A549 (cell line): ENCODE measurements at regions of chr15 and their contacts with region 1.

Region 1: DNA sequence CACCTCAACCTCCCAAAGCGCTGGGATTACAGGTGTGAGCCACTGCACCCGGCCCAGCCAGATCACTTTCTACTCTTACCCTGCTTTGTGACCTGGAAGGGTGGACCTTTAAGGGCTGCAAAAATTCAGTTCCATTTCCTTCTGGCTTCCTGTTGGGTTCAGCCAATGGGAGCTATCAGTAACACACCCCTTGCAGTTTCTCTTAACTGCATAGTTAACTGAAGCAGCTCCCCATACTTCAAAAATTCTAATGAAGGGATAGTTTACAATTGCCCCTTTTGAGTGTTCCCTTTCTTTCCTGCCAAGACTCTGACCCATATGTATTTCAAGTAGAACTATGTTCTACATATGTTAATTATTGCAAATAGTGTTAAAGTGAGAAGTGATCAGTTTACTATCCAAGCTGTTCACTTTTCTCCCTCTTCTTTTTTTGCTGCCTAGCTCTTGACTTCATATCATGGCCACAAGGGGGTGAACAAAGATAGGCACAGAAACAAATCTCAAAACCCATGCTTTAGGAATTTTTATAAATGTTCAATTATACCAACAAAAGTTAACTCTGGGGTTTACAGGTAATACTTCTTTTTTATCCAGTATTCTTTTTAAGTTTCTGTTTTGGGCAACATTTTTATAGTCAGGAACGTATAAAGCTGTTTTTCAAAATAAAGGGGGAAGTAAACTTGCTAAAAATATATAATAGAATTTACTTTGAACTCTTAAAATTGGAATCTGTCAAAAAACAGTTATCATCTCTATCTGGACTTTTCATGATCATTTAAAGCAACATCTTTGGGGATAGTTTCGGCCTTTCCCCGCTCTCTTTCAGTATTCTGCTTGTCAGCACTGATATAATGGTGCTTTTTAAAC is 8.1 kb downstream of the PGBD4 start:
- DNase-seq: peak; percentile 34 to 64
- ATAC-seq: peak; percentile 79; a peak in 5 of 6 replicates
- H3K4me3 ChIP-seq: no peak overlapping the region
- H3K27ac ChIP-seq: no peak overlapping the region
- H3K4me1 ChIP-seq: no peaks in the 10 kb centered on the region
- CTCF ChIP-seq: peak; percentile 94
- EP300 ChIP-seq: no peak
- POLR2A ChIP-seq: no peak
- RAD21 ChIP-seq: peak; percentile 91 to 96

Region 2: DNA sequence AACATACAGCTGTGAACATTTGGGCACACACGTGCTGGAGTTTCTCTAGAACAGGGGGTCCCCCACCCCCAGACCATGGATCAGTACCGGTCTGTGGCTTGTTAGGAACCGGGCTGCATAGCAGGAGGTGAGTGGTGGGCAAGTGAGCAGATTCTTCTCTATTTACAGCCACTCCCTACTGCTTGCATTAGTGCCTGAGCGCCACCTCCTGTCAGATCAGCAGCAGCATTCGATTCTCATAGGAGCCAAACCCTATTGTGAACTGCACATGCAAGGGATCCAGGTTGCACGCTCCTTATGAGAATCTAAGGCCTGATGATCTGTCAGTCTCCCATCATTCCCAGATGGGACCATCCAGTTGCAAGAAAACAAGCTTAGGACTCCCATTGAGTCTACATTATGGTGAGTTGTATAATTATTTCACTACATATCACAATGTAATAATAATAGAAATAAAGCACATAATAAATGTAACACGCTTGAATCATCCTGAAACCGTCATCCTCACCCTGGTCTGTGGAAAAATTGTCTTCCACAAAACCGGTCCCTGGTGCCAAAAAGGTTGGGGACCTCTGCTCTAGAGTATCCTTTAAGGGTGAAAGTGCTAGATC is 115.9 kb before region 1 on chr15:
- CTCF ChIA-PET with region 1: no interaction called
- POLR2A ChIA-PET with region 1: no interaction called
- DNase-seq: peak in 1 of 2 experiments; percentile 68
- ATAC-seq: peak; percentile 71 to 93; a peak in 5 of 6 replicates
- H3K4me3 ChIP-seq: no peak overlapping the region
- H3K27ac ChIP-seq: no peak overlapping the region
- H3K4me1 ChIP-seq: no peaks in the 10 kb centered on the region
- CTCF ChIP-seq: peak; percentile 55
- EP300 ChIP-seq: no peak
- POLR2A ChIP-seq: no peak
- RAD21 ChIP-seq: peak; percentile 55 to 72; a peak in 4 of 5 replicates

Region 3: GRCh38 chr15:34064438-34064837 is 45.6 kb before region 1 on chr15:
- CTCF ChIA-PET with region 1: interaction called, 11 read pairs
- POLR2A ChIA-PET with region 1: no interaction called
- DNase-seq: no peak
- ATAC-seq: no peak
- H3K4me3 ChIP-seq: no peak overlapping the region
- H3K27ac ChIP-seq: no peak overlapping the region
- H3K4me1 ChIP-seq: no peaks in the 10 kb centered on the region
- CTCF ChIP-seq: no peak
- EP300 ChIP-seq: no peak
- POLR2A ChIP-seq: no peak
- RAD21 ChIP-seq: no peak

Region 4: DNA sequence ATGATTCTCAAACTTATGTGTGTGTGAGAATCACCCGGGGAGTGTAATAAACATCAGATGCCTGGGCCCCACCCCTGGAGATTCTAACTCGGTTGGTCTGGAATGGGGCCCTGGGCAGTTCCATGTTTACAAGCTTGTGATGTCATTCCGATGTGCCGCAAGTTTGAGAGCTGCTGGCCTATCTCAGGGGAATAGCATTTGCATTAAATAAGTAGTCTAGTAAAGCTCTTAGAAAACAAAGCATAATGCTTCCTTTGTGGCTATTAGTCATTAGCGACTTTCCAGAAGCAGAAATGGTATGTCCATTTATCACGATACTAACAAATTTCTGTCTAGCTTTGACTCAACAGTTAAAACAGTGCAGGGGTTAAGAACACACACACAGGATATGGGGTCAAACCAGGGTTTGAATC is 12.7 kb after region 1 on chr15:
- CTCF ChIA-PET with region 1: interaction called, 64 read pairs
- POLR2A ChIA-PET with region 1: no interaction called
- DNase-seq: no peak
- ATAC-seq: no peak
- H3K4me3 ChIP-seq: no peak overlapping the region
- H3K27ac ChIP-seq: no peak overlapping the region
- H3K4me1 ChIP-seq: no peaks in the 10 kb centered on the region
- CTCF ChIP-seq: no peak
- EP300 ChIP-seq: no peak
- POLR2A ChIP-seq: no peak
- RAD21 ChIP-seq: no peak

Region 5: GRCh38 chr15:34217587-34218225 is 107.7 kb after region 1 on chr15:
- CTCF ChIA-PET with region 1: interaction called, 223 read pairs
- POLR2A ChIA-PET with region 1: no interaction called
- DNase-seq: no peak
- ATAC-seq: peak in 1 of 2 experiments; percentile 36; a peak in 3 of 6 replicates
- H3K4me3 ChIP-seq: no peak overlapping the region
- H3K27ac ChIP-seq: no peak overlapping the region
- H3K4me1 ChIP-seq: no peaks in the 10 kb centered on the region
- CTCF ChIP-seq: no peak
- EP300 ChIP-seq: no peak
- POLR2A ChIP-seq: no peak
- RAD21 ChIP-seq: no peak